Endothelial cell of umbilical vein (primary cell): ENCODE measurements at regions of chr1 and their contacts with region 1.

Region 1: DNA sequence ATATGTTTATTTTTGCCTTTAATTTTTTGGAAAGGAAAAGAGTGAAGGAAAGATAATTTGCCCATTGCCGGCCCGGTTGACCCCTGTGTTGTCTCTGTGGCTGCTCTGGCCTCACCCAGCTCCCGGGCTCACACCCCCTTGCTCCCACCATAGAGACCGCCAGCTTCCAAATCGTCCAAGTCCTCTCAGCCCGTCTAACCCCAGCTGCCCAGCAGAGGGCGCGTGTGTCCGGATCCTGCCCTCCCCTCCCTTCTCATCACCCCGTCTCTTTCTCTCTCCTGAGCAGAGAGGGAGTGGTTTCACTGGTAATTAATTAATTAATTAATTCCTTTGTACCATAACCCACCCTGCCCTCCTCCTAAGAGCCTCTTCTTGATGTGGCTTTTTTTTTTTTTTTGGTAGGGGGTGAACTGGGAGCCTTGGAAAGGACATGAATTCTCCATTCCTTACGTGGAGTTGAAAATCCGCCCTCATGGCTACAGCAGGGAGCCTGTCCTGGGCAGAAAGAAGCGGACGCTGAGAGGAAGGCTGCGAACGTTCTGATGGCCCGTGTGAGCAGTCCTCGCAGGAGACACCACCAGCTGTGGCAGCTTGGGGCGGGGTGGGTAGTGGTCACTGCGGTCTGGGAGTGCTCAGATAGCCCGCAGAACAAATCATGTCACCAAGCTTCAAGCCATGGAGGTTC is 45.9 kb downstream of the KIAA0040 start:
- DNase-seq: peak; percentile 65
- H3K4me3 ChIP-seq: no peak overlapping the region
- H3K27ac ChIP-seq: no peak overlapping the region
- H3K4me1 ChIP-seq: no peaks in the 10 kb centered on the region
- H3K27me3 ChIP-seq: peaks cover 0 to 14% of the 10 kb centered on the region in 2 experiments
- CTCF ChIP-seq: peak; percentile 86 to 95
- POLR2A ChIP-seq: no peak

Region 2: GRCh38 chr1:174726167-174726879 is 420.3 kb before region 1 on chr1:
- CTCF ChIA-PET with region 1: no interaction called
- POLR2A ChIA-PET with region 1: no interaction called
- dilution Hi-C with region 1: no loop called
- intact Hi-C with region 1: no loop called
- DNase-seq: peak; percentile 25
- H3K4me3 ChIP-seq: no peak overlapping the region
- H3K27ac ChIP-seq: no peak overlapping the region
- H3K4me1 ChIP-seq: no peaks in the 10 kb centered on the region
- H3K27me3 ChIP-seq: no peaks in the 10 kb centered on the region
- CTCF ChIP-seq: peak in 1 of 2 donors; percentile 19
- POLR2A ChIP-seq: no peak

Region 3: GRCh38 chr1:174769961-174770549 is 376.6 kb before region 1 on chr1:
- CTCF ChIA-PET with region 1: interaction called, 5 read pairs
- POLR2A ChIA-PET with region 1: no interaction called
- dilution Hi-C with region 1: no loop called
- intact Hi-C with region 1: loop called (anchors 5 kb)
- DNase-seq: peak; percentile 51
- H3K4me3 ChIP-seq: no peak overlapping the region
- H3K27ac ChIP-seq: no peak overlapping the region
- H3K4me1 ChIP-seq: no peaks in the 10 kb centered on the region
- H3K27me3 ChIP-seq: no peaks in the 10 kb centered on the region
- CTCF ChIP-seq: peak; percentile 48 to 50
- POLR2A ChIP-seq: no peak

Region 4: DNA sequence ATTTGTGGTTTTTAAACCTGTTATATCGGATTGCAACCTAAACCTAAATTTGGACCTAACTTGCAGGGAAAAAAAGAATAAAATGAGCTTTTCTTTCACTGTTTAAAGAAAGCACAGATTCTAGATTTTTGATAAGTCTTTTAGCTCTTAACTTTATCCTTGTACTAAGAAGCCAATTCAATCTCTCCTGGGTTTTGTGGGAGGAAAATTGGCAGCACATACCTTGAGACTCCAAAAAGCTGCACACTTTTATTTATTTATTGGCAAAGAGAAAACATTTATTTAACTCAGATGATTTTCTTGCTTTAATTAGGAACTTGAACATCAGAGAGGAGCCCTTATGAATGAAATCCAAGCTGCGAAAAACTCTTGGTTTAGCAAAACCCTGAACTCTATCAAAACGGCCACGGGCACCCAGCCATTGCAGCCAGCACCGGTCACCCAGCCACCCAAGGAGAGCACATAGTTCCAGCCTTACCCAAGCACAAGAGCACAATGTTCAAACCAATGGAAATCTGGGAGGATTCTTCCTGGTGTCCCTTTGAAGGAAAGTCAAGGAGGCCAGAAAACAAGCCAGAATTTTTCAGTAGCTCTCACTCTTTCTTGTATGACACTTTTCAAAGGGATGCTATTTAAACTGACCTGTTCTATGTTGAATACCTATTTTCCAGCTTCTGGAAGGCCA is 157.0 kb before region 1 on chr1:
- CTCF ChIA-PET with region 1: no interaction called
- POLR2A ChIA-PET with region 1: no interaction called
- dilution Hi-C with region 1: no loop called
- intact Hi-C with region 1: no loop called
- DNase-seq: no peak
- H3K4me3 ChIP-seq: no peak overlapping the region
- H3K27ac ChIP-seq: peak overlapping the region; percentile 83
- H3K4me1 ChIP-seq: peaks cover 14% of the 10 kb centered on the region
- H3K27me3 ChIP-seq: no peaks in the 10 kb centered on the region
- CTCF ChIP-seq: no peak
- POLR2A ChIP-seq: no peak

Region 5: GRCh38 chr1:175035865-175036264 is 110.8 kb before region 1 on chr1:
- CTCF ChIA-PET with region 1: interaction called, 18 read pairs
- POLR2A ChIA-PET with region 1: no interaction called
- dilution Hi-C with region 1: no loop called
- intact Hi-C with region 1: no loop called
- DNase-seq: no peak
- H3K4me3 ChIP-seq: no peak overlapping the region
- H3K27ac ChIP-seq: no peak overlapping the region
- H3K4me1 ChIP-seq: no peaks in the 10 kb centered on the region
- H3K27me3 ChIP-seq: peaks cover 0 to 2% of the 10 kb centered on the region in 2 experiments
- CTCF ChIP-seq: no peak
- POLR2A ChIP-seq: no peak

Region 6: DNA sequence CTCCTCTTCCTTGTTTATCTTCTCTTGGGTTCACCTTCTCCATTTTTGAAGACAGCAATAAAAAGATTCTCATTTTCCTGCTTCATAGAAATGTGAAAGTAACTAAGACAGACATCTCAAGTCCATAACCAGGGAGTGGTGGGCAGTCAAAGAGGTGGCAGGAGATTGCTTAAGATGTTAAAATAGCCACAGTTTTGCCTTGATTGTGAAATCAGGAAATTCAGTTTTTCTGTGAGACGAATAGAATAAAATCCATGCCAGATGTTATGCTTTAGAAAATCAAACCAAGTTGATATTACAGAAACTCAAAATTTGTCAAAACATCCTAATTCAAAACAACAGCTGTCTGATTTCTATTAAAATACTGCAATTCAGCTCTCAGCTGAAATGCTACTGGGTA is 21.8 kb before region 1 on chr1:
- CTCF ChIA-PET with region 1: interaction called, 39 read pairs
- POLR2A ChIA-PET with region 1: no interaction called
- dilution Hi-C with region 1: no loop called
- intact Hi-C with region 1: no loop called
- DNase-seq: no peak
- H3K4me3 ChIP-seq: no peak overlapping the region
- H3K27ac ChIP-seq: no peak overlapping the region
- H3K4me1 ChIP-seq: no peaks in the 10 kb centered on the region
- H3K27me3 ChIP-seq: peaks cover 0 to 2% of the 10 kb centered on the region in 2 experiments
- CTCF ChIP-seq: no peak
- POLR2A ChIP-seq: no peak

Region 7: GRCh38 chr1:175129997-175130648 is 16.5 kb before region 1 on chr1:
- CTCF ChIA-PET with region 1: interaction called, 39 read pairs
- POLR2A ChIA-PET with region 1: no interaction called
- dilution Hi-C with region 1: no loop called
- intact Hi-C with region 1: no loop called
- DNase-seq: peak; percentile 72
- H3K4me3 ChIP-seq: no peak overlapping the region
- H3K27ac ChIP-seq: no peak overlapping the region
- H3K4me1 ChIP-seq: no peaks in the 10 kb centered on the region
- H3K27me3 ChIP-seq: peaks cover 0 to 6% of the 10 kb centered on the region in 2 experiments
- CTCF ChIP-seq: no peak
- POLR2A ChIP-seq: no peak

Region 8: DNA sequence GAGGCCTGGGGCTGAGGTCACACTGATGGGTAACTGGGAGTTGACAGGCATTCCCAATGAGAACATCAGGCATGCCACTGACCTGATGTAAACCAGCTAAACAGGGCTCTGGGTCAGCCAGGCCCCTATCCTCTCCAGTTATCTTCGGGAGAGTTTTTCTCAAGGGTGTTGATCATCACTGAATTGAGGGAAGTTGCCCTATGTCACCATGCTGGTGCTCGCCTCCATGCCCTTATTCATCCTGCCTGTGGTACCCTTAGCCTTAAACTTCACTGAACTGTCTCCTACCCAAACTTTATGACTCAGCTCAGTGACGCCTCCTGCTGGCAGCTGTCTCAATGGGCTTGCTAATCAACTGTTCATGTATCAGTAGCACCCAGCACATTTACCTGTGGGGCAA is 677.4 kb after region 1 on chr1:
- CTCF ChIA-PET with region 1: interaction called, 11 read pairs
- POLR2A ChIA-PET with region 1: no interaction called
- dilution Hi-C with region 1: no loop called
- intact Hi-C with region 1: loop called (anchors 1 kb)
- DNase-seq: peak; percentile 41
- H3K4me3 ChIP-seq: no peak overlapping the region
- H3K27ac ChIP-seq: no peak overlapping the region
- H3K4me1 ChIP-seq: no peaks in the 10 kb centered on the region
- H3K27me3 ChIP-seq: no peaks in the 10 kb centered on the region
- CTCF ChIP-seq: peak; percentile 50 to 54
- POLR2A ChIP-seq: no peak

Region 9: GRCh38 chr1:176880954-176881595 is 1734.4 kb after region 1 on chr1:
- CTCF ChIA-PET with region 1: interaction called, 16 read pairs
- POLR2A ChIA-PET with region 1: no interaction called
- dilution Hi-C with region 1: no loop called
- intact Hi-C with region 1: no loop called
- DNase-seq: peak; percentile 46
- H3K4me3 ChIP-seq: no peak overlapping the region
- H3K27ac ChIP-seq: no peak overlapping the region
- H3K4me1 ChIP-seq: no peaks in the 10 kb centered on the region
- H3K27me3 ChIP-seq: no peaks in the 10 kb centered on the region
- CTCF ChIP-seq: peak; percentile 79
- POLR2A ChIP-seq: no peak